ENCODE measurements at regions of chr12 and their contacts with region 1.

Region 1: DNA sequence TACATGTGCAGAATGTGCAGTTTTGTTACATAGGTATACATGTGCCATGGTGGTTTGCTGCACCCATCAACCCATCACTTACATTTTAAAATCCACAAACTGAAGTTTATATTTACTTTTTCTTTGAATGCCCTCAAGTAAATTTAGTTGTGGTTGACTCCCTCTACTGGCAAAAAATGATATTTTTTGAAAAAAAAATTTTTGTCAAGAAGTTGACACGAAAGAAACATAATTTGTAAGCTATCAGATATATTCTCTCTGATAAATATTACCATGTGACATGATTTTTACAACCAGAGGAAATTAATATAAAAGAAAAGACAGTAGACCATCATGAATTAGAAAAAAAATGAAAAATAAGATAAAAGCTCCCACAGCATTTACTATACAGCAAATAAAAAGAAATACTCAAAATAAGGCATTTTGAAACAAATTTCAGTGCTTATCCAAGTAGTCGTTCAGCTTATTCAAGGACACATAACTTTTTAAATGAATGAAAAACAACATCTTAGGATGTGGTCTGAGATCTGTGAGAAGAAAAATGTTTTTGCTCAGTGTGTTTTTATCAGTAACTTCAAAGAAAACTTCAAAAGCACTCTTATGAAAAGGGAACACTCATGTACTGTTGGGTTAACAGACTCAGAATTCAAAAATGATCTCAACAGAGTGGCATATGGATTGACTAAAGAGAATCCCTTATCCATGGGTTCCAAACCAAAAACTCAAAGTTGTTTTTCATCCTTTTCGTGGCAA is 30.0 kb upstream of the GRIP1 start:
- DNase-seq: peak; percentile 34
- H3K4me3 ChIP-seq: no peak overlapping the region
- H3K27ac ChIP-seq: no peak overlapping the region
- H3K4me1 ChIP-seq: no peaks in the 10 kb centered on the region
- H3K27me3 ChIP-seq: peaks cover 5 to 23% of the 10 kb centered on the region in 2 experiments
- CTCF ChIP-seq: peak; percentile 7 to 15
- POLR2A ChIP-seq: no peak

Region 2: DNA sequence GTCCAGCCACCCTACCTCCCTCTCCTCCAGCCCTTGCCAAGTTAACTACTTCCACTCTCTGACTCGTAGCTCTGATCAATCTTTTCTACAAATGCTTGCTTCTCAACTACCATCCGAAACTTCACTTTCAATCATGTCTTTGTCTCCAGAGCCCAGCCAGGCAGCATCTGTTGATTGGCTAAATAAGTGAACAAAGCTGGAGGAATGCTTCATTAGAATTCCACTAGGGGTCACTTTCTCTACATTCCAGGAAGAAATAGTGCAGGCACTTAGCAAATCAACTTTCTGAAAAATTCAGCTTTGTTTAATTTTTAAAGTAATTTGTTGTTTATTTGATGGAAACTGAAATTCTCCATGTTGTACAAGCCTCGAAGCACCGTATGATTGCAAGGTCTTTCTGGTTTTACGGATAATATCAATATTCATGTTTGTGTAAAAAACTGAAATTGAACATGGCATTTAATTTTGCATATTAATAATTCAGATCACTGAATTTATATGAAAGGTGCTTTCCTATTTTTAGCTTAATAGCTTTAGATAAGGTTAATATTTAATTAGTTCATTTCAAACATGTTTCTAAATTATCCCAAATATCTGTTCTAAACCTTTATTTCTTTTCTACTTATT is 439.0 kb before region 1 on chr12:
- CTCF ChIA-PET with region 1: interaction called, 24 read pairs
- POLR2A ChIA-PET with region 1: no interaction called
- dilution Hi-C with region 1: no loop called
- intact Hi-C with region 1: no loop called
- DNase-seq: peak; percentile 34
- H3K4me3 ChIP-seq: no peak overlapping the region
- H3K27ac ChIP-seq: no peak overlapping the region
- H3K4me1 ChIP-seq: no peaks in the 10 kb centered on the region
- H3K27me3 ChIP-seq: peaks cover 0 to 4% of the 10 kb centered on the region in 2 experiments
- CTCF ChIP-seq: peak; percentile 56 to 58
- POLR2A ChIP-seq: no peak

Region 3: GRCh38 chr12:66279123-66279712 is 429.7 kb before region 1 on chr12:
- CTCF ChIA-PET with region 1: interaction called, 15 read pairs
- POLR2A ChIA-PET with region 1: no interaction called
- dilution Hi-C with region 1: no loop called
- intact Hi-C with region 1: loop called (anchors 1 kb)
- DNase-seq: peak; percentile 48
- H3K4me3 ChIP-seq: no peak overlapping the region
- H3K27ac ChIP-seq: no peak overlapping the region
- H3K4me1 ChIP-seq: peaks cover 2% of the 10 kb centered on the region
- H3K27me3 ChIP-seq: no peaks in the 10 kb centered on the region
- CTCF ChIP-seq: peak; percentile 63 to 69
- POLR2A ChIP-seq: no peak

Region 4: DNA sequence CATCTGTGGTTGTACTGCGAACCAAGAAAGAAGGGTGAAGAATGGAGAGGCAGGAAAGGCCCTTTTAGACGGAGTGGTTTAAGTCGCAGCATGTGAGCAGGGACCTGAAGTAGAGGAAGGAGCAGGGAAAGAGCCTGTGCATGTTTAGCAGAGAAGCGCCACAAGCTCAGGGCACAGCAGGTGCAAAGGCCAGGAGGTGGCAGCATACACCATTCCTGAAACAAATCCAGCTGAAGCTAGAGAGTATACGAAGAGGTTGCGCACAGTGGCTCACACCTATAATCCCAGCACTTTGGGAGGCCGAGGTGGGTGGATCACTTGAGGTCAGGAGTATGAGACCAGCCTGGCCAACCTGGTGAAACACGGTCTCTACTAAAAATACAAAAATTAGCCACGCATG is 356.7 kb before region 1 on chr12:
- CTCF ChIA-PET with region 1: interaction called, 11 read pairs
- POLR2A ChIA-PET with region 1: no interaction called
- dilution Hi-C with region 1: no loop called
- intact Hi-C with region 1: no loop called
- DNase-seq: peak; percentile 27
- H3K4me3 ChIP-seq: no peak overlapping the region
- H3K27ac ChIP-seq: no peak overlapping the region
- H3K4me1 ChIP-seq: no peaks in the 10 kb centered on the region
- H3K27me3 ChIP-seq: no peaks in the 10 kb centered on the region
- CTCF ChIP-seq: peak; percentile 19 to 35
- POLR2A ChIP-seq: no peak

Region 5: GRCh38 chr12:66612090-66612775 is 96.6 kb before region 1 on chr12:
- CTCF ChIA-PET with region 1: no interaction called
- POLR2A ChIA-PET with region 1: no interaction called
- dilution Hi-C with region 1: no loop called
- intact Hi-C with region 1: no loop called
- DNase-seq: no peak
- H3K4me3 ChIP-seq: no peak overlapping the region
- H3K27ac ChIP-seq: no peak overlapping the region
- H3K4me1 ChIP-seq: no peaks in the 10 kb centered on the region
- H3K27me3 ChIP-seq: peaks cover 0 to 1% of the 10 kb centered on the region in 2 experiments
- CTCF ChIP-seq: no peak
- POLR2A ChIP-seq: no peak

Region 6: DNA sequence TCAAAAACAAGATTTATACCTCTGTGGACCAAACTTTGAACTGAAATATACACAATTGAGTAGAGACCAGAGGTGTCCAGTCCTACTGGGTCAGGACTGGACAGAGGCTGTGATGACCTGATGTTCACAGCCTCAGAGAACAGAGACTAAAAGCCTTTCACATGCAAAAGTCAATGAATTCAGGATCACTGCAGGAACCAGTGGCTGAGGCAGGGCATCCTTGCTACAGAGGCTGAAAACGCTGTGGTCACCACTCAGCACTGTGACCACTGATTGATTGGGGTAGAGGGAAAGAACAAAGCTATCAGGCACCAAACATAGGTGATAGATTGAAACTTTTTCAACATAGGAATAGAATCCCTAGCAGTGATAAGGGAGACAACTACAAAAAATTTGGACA is 55.1 kb before region 1 on chr12:
- CTCF ChIA-PET with region 1: no interaction called
- POLR2A ChIA-PET with region 1: no interaction called
- dilution Hi-C with region 1: no loop called
- intact Hi-C with region 1: no loop called
- DNase-seq: no peak
- H3K4me3 ChIP-seq: no peak overlapping the region
- H3K27ac ChIP-seq: no peak overlapping the region
- H3K4me1 ChIP-seq: no peaks in the 10 kb centered on the region
- H3K27me3 ChIP-seq: peaks cover 3 to 6% of the 10 kb centered on the region in 2 experiments
- CTCF ChIP-seq: no peak
- POLR2A ChIP-seq: no peak

Region 7: GRCh38 chr12:66744956-66745383 is 36.1 kb after region 1 on chr12:
- CTCF ChIA-PET with region 1: no interaction called
- POLR2A ChIA-PET with region 1: no interaction called
- dilution Hi-C with region 1: no loop called
- intact Hi-C with region 1: no loop called
- DNase-seq: no peak
- H3K4me3 ChIP-seq: no peak overlapping the region
- H3K27ac ChIP-seq: no peak overlapping the region
- H3K4me1 ChIP-seq: no peaks in the 10 kb centered on the region
- H3K27me3 ChIP-seq: no peaks in the 10 kb centered on the region
- CTCF ChIP-seq: no peak
- POLR2A ChIP-seq: no peak